HepG2 (cell line): ENCODE measurements at regions of chr14 and their contacts with region 1.

Region 1: DNA sequence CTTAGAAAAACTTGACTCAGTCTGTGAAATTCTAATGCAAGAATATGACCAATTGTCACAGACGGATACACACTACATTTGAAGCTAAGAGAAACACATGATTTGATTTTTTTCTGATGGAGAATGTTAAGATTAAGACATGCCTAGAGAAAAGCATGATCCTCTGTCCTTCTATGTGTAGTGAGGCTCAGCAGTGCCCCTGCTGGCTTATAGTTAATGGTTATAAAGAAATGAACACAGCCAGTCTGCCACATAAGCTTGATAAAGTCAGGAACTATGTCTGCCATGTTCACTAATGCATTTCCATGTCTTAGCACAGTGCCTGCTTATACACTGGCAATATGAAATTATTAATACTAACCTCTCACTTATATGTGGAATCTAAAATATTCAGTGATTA is 168.1 kb upstream of the DAAM1 start:
- DNase-seq: no peak
- ATAC-seq: peak; percentile 79
- H3K4me3 ChIP-seq: no peak overlapping the region
- H3K27ac ChIP-seq: no peak overlapping the region
- H3K4me1 ChIP-seq: no peaks in the 10 kb centered on the region
- H3K27me3 ChIP-seq: no peaks in the 10 kb centered on the region
- CTCF ChIP-seq: peak; percentile 46
- EP300 ChIP-seq: no peak
- POLR2A ChIP-seq: no peak
- RAD21 ChIP-seq: no peak

Region 2: GRCh38 chr14:58637391-58638230 is 382.8 kb before region 1 on chr14 and contains the start of gene DACT1:
- CTCF ChIA-PET with region 1: interaction called, 4 read pairs
- POLR2A ChIA-PET with region 1: no interaction called
- in situ Hi-C with region 1: no loop called
- intact Hi-C with region 1: loop called (anchors 1 kb)
- DNase-seq: no peak
- ATAC-seq: peak; percentile 87
- H3K4me3 ChIP-seq: peak within 1 kb of the TSS; percentile 36 to 68 (median 46)
- H3K27ac ChIP-seq: no peak within 1 kb of the TSS
- H3K4me1 ChIP-seq: peaks cover 9% of the 10 kb centered on the region
- H3K27me3 ChIP-seq: peaks cover 5 to 55% of the 10 kb centered on the region in 2 experiments
- CTCF ChIP-seq: no peak
- EP300 ChIP-seq: no peak
- POLR2A ChIP-seq: no peak
- RAD21 ChIP-seq: 0 out of 2 replicates have a peak, but pooled peaks have one; percentile 18
- total RNA-seq, gene DACT1: not detected in 2 replicates

Region 3: DNA sequence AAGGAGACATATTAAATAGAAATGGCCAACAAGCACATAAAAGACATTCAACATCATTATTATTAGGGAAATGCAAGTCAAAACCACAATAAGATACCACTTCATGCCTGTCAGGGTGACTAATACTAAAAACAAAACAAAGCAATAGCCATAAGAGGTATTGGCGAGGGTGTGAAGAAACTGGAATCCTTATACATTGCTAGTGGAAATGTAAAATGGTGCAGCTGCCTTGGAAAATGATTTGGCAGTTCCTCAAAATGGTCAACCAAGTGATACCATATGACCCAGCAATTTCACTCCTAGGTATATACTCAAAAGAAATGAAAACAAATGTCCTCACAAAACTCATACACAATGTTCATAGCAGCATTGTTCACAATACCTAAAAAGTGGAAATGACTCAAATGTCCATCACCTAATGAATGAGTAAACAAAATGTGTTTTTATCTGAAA is 417.8 kb after region 1 on chr14:
- CTCF ChIA-PET with region 1: no interaction called
- POLR2A ChIA-PET with region 1: no interaction called
- in situ Hi-C with region 1: loop called (anchors 5 kb)
- intact Hi-C with region 1: no loop called
- DNase-seq: no peak
- ATAC-seq: no peak
- H3K4me3 ChIP-seq: no peak overlapping the region
- H3K27ac ChIP-seq: no peak overlapping the region
- H3K4me1 ChIP-seq: no peaks in the 10 kb centered on the region
- H3K27me3 ChIP-seq: no peaks in the 10 kb centered on the region
- CTCF ChIP-seq: no peak
- EP300 ChIP-seq: no peak
- POLR2A ChIP-seq: no peak
- RAD21 ChIP-seq: no peak